PC-9 (cell line): ENCODE measurements at regions of chrX and their contacts with region 1.

Region 1: DNA sequence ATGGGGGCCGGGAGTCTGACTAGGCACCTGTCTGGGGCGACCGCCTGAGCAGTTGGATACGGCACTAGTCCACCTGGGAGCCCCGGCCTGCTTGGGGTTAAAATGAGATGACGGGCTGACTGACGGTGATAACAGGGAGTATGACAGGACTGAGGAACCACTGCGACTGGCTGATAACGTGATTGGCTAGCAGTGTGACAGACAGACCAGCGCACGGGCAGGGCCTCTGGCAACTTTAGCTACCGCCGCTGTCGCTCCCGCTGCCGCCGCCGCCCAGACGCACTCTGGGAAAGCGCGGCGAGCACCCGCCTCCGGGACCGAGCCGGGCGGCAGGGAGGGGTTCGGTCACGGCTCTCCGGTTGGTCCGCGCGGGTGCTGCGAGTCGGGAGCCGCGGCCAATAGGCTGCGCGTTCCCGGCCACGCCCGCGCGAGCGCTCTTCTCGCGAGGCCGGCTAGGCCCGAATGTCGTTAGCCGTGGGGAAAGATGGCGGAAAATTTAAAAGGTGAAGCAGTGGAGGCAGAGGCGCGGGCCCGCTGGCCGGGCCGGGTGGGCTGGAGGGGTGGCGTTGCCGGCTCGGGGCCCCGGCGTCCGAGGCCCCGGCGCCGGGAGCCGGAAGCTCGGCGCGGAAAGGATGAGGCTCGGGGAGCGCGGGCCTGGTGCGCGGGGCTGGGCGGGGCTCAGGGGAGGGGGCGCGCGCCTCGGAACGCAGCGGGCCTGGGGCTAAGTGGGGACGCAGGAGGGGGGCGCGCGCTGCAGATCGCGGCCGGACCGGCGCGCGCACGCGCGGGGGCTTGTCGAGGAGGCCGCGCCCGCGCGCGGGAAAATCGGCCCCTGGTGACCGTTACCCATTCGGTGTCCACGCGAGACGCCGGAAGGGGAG is at the start of gene SUV39H1:
- DNase-seq: peak; percentile 58 to 74
- H3K4me3 ChIP-seq: peak within 1 kb of the TSS; percentile 52; the same call in 1 of the 2 replicates
- H3K27ac ChIP-seq: no peak within 1 kb of the TSS
- H3K4me1 ChIP-seq: no peaks in the 10 kb centered on the region
- H3K27me3 ChIP-seq: no peaks in the 10 kb centered on the region
- CTCF ChIP-seq: no peak
- total RNA-seq, gene SUV39H1: 10.5 and 11.7 TPM in 2 replicates

Region 2: GRCh38 chrX:48683411-48683982 is 13.0 kb before region 1 on chrX and contains the start of gene WAS:
- CTCF ChIA-PET with region 1: no interaction called
- POLR2A ChIA-PET with region 1: no interaction called
- intact Hi-C with region 1: no loop called
- DNase-seq: no peak
- H3K4me3 ChIP-seq: no peak within 1 kb of the TSS
- H3K27ac ChIP-seq: no peak within 1 kb of the TSS
- H3K4me1 ChIP-seq: no peaks in the 10 kb centered on the region
- H3K27me3 ChIP-seq: no peaks in the 10 kb centered on the region
- CTCF ChIP-seq: no peak
- total RNA-seq, gene WAS: 0.22 TPM in 1 of 2 replicates, not detected in the other

Region 3: DNA sequence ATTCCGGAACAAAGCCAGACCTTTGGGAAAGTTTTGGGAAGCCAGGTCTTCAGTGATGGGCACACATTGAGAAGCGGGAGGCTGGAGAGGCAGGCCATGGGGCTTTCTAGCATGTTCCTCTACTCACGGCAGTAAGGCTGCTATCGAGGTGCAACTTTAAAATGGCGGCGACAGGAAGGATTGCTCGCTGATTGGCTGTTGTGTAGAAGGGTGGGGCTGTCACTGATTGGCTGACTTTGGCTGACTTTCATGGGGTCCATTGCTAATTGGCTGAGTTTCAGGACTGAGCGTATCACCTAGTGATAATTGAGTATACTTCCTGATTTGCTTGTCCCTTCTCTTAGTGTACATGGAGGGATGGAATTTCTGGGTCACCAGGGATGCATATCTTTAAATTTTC is 45.3 kb after region 1 on chrX:
- CTCF ChIA-PET with region 1: no interaction called
- POLR2A ChIA-PET with region 1: no interaction called
- intact Hi-C with region 1: no loop called
- DNase-seq: no peak
- H3K4me3 ChIP-seq: no peak overlapping the region
- H3K27ac ChIP-seq: no peak overlapping the region
- H3K4me1 ChIP-seq: no peaks in the 10 kb centered on the region
- H3K27me3 ChIP-seq: no peaks in the 10 kb centered on the region
- CTCF ChIP-seq: no peak

Region 4: GRCh38 chrX:48753706-48754105 is 57.2 kb after region 1 on chrX:
- CTCF ChIA-PET with region 1: no interaction called
- POLR2A ChIA-PET with region 1: no interaction called
- intact Hi-C with region 1: loop called (anchors 2 kb)
- DNase-seq: peak; percentile 6 to 37
- H3K4me3 ChIP-seq: no peak overlapping the region
- H3K27ac ChIP-seq: 0 out of 2 replicates have a peak overlapping the region, but pooled peaks have one; percentile 23
- H3K4me1 ChIP-seq: no peaks in the 10 kb centered on the region
- H3K27me3 ChIP-seq: no peaks in the 10 kb centered on the region
- CTCF ChIP-seq: no peak